Activated CD8-positive, alpha-beta T cell treated with anti-CD3 and anti-CD28 coated beads for 36 hours (primary cell): ENCODE measurements at regions of chr11 and their contacts with region 1.

Region 1: GRCh38 chr11:62081378-62082291 is 42.2 kb upstream of the INCENP start:
- DNase-seq: peak; percentile 85
- ATAC-seq: peak; percentile 95
- H3K4me3 Mint-ChIP-seq: peak overlapping the region; percentile 32
- H3K27ac Mint-ChIP-seq: no peak overlapping the region
- H3K4me1 Mint-ChIP-seq: peaks cover 5% of the 10 kb centered on the region
- H3K27me3 Mint-ChIP-seq: no peaks in the 10 kb centered on the region
- CTCF ChIP-seq: peak; percentile 96

Region 2: DNA sequence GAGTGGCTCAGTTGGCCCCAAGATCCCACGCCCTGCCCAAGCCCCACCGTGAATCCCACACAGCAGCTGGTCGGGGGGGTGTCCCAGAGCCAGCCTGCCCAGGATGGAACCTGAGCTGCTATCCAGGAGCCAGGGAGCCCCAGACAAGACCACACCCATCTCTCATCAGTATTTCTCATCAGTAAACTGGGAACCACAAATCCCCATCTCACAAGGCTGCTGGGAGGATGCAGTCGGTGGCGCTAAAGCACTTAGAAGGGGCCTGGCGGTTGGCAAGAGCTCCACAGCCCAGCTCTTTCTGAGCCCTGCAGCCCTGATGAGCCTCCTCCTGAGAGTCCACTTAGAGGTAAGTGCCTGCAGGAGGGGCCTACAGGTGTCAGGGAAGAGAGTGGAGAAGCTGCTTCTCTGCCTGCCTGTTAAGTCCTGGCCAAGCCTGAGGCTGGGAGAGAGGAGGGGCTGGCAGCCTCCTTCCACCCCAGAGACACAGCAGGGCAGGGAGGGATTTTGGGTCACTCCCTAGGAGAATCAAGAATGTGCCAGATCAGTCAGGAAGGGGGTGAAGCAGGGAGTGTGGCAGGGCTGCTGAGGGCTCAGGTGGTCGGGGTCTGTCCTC is 196.4 kb before region 1 on chr11:
- CTCF ChIA-PET with region 1: interaction called, 23 read pairs
- POLR2A ChIA-PET with region 1: no interaction called
- intact Hi-C with region 1: no loop called
- DNase-seq: no peak
- ATAC-seq: no peak
- H3K4me3 Mint-ChIP-seq: no peak overlapping the region
- H3K27ac Mint-ChIP-seq: no peak overlapping the region
- H3K4me1 Mint-ChIP-seq: no peaks in the 10 kb centered on the region
- H3K27me3 Mint-ChIP-seq: no peaks in the 10 kb centered on the region
- CTCF ChIP-seq: no peak

Region 3: GRCh38 chr11:61947486-61948210 is 134.0 kb before region 1 on chr11:
- CTCF ChIA-PET with region 1: interaction called, 112 read pairs
- POLR2A ChIA-PET with region 1: no interaction called
- intact Hi-C with region 1: no loop called
- DNase-seq: peak; percentile 82
- ATAC-seq: peak; percentile 77
- H3K4me3 Mint-ChIP-seq: no peak overlapping the region
- H3K27ac Mint-ChIP-seq: no peak overlapping the region
- H3K4me1 Mint-ChIP-seq: peaks cover 7% of the 10 kb centered on the region
- H3K27me3 Mint-ChIP-seq: peaks cover 3% of the 10 kb centered on the region
- CTCF ChIP-seq: peak; percentile 80

Region 4: DNA sequence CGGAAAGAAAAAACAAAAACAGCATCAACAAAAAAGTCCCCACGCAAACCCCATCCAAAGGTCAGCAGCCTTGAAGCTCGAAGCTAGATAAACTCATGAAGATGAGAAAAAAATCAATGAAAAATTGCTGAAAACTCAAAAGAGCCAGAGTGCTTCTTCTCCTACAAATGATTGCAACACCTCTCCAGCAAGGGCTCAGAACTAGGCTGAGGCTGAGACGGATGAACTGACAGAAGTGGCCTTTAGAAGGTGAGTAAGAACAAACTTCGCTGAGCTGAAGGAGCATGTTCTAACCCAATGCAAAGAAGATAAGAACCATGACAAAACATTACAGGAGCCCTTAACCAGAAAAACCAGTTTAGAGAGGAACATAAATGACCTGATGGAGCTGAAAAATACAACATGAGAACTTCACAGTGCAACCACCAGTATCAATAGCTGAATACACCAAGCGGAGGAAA is 95.7 kb before region 1 on chr11:
- CTCF ChIA-PET with region 1: interaction called, 10 read pairs
- POLR2A ChIA-PET with region 1: no interaction called
- intact Hi-C with region 1: no loop called
- DNase-seq: no peak
- ATAC-seq: no peak
- H3K4me3 Mint-ChIP-seq: no peak overlapping the region
- H3K27ac Mint-ChIP-seq: no peak overlapping the region
- H3K4me1 Mint-ChIP-seq: no peaks in the 10 kb centered on the region
- H3K27me3 Mint-ChIP-seq: no peaks in the 10 kb centered on the region
- CTCF ChIP-seq: no peak

Region 5: GRCh38 chr11:62048065-62048464 is 33.6 kb before region 1 on chr11:
- CTCF ChIA-PET with region 1: interaction called, 13 read pairs
- POLR2A ChIA-PET with region 1: no interaction called
- intact Hi-C with region 1: no loop called
- DNase-seq: no peak
- ATAC-seq: no peak
- H3K4me3 Mint-ChIP-seq: no peak overlapping the region
- H3K27ac Mint-ChIP-seq: no peak overlapping the region
- H3K4me1 Mint-ChIP-seq: no peaks in the 10 kb centered on the region
- H3K27me3 Mint-ChIP-seq: no peaks in the 10 kb centered on the region
- CTCF ChIP-seq: no peak

Region 6: DNA sequence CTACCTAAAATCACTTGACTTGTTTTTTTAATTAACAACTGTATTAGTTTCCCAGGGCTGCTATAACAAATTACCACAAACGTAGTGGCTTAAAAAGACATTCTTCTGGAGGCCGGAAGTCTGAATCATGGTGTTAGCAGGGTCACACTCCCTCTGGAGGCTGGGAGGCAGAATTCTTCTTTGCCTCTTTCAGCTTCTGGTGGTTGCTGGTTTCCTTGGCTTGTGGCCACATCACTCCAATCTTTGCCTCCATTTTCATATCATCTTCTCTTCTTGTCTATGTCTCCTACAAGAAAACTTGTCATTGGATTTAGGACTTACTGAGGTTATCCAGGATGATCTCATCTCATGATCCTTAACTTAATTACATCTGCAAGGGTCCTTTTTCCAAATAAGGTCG is 34.8 kb after region 1 on chr11:
- CTCF ChIA-PET with region 1: interaction called, 15 read pairs
- POLR2A ChIA-PET with region 1: no interaction called
- intact Hi-C with region 1: no loop called
- DNase-seq: no peak
- ATAC-seq: no peak
- H3K4me3 Mint-ChIP-seq: no peak overlapping the region
- H3K27ac Mint-ChIP-seq: no peak overlapping the region
- H3K4me1 Mint-ChIP-seq: peaks cover 2% of the 10 kb centered on the region
- H3K27me3 Mint-ChIP-seq: no peaks in the 10 kb centered on the region
- CTCF ChIP-seq: no peak